ENCODE measurements at regions of chr7 and their contacts with region 1.

Region 1: GRCh38 chr7:151550656-151551286 is 31.1 kb upstream of the RHEB start:
- DNase-seq: peak; percentile 89
- ATAC-seq: peak; percentile 78
- H3K4me3 ChIP-seq: no peak overlapping the region
- H3K27ac ChIP-seq: peak overlapping the region; percentile 76; the same call in 1 of the 2 replicates
- H3K4me1 ChIP-seq: peaks cover 3% of the 10 kb centered on the region; the same call in 1 of the 2 replicates
- H3K27me3 ChIP-seq: peaks cover 8% of the 10 kb centered on the region
- CTCF ChIP-seq: no peak
- POLR2A ChIP-seq: no peak
- RAD21 ChIP-seq: no peak

Region 2: DNA sequence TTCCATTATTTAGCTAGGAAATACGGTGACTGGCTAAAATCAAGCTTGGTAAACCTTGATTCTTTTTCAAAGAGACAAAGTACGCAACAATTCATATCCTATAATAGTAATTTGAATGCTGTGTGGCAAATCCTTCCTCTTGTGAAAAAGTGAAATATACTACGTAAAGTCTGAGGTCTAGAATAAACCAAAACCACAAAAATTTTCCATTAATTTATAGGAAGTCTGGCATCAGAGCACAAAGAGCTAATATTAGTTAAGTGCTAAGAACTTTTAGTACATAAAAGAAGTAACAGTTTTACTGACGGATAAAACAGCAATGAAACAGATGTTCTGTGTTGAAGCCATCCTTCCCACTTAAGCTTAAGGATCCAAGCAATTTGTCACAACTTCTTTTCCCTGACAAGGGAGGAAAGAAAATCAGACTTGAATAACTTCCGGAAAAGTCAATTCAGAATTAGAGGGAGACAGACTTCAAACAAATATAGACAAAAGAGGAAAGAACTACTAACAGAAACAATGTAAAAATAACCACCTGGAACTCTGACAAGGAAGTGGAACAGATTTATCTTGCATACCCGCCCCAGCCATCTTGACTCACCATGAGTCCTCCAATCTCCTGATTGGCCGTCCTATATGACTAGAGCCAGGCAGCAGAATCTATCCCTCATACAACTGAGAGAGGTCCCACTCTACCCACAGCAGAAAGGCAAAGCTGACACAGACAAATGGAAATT is 65.6 kb before region 1 on chr7:
- CTCF ChIA-PET with region 1: no interaction called
- POLR2A ChIA-PET with region 1: no interaction called
- dilution Hi-C with region 1: no loop called
- in situ Hi-C with region 1: no loop called
- intact Hi-C with region 1: loop called (anchors 10 kb)
- DNase-seq: peak; percentile 88
- ATAC-seq: peak; percentile 79
- H3K4me3 ChIP-seq: no peak overlapping the region
- H3K27ac ChIP-seq: no peak overlapping the region
- H3K4me1 ChIP-seq: peaks cover 18% of the 10 kb centered on the region
- H3K27me3 ChIP-seq: no peaks in the 10 kb centered on the region
- CTCF ChIP-seq: no peak
- POLR2A ChIP-seq: no peak
- RAD21 ChIP-seq: no peak

Measured in IMR-90 (cell line).